ENCODE measurements at regions of chr20 and their contacts with region 1.

Region 1: DNA sequence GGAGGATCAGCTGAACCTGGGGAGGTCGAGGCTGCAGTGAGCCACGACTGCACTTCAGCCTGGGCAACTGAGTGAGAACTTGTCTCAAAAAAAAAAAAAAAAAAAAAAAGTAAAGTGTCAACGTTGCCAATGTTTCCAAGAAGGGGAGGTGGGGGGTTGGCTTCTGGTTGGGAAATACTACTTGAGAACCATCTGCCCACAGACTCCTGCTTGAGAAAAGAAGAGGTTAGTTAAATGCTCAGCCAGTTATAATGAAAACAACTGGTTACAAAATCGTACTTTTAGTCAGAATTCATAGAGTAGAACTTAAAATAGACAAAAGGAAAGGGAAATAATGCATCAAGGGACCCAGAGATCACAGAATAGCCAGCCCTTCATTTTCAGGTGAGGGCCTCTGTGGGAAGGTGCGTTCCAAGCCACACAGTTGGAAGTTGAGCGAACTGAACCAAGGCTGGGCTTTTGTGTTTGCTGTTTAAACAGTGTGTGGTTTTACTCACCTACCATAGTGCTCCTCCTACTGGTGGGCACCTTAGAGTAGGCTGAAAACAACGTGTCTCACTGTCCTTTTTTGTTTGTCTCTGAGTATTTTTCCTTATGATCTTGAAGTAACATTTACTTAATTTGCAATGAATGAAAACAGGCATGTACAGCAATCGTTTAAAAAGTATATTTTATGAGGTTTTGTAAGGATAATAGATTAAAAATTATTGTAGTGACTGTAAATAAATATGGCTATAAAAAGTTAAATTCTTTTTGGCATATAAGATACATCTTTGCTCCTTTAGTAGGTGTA is 200.7 kb downstream of the BCAS1 start:
- DNase-seq: peak; percentile 92
- H3K4me3 Mint-ChIP-seq: peak overlapping the region; percentile 57
- H3K27ac Mint-ChIP-seq: peak overlapping the region; percentile 92
- H3K4me1 Mint-ChIP-seq: peaks cover 63% of the 10 kb centered on the region
- H3K27me3 Mint-ChIP-seq: no peaks in the 10 kb centered on the region

Region 2: GRCh38 chr20:53660078-53660909 is 209.4 kb before region 1 on chr20:
- intact Hi-C with region 1: loop called (anchors 1 kb)
- DNase-seq: peak; percentile 82
- H3K4me3 Mint-ChIP-seq: peak overlapping the region; percentile 84
- H3K27ac Mint-ChIP-seq: peak overlapping the region; percentile 93
- H3K4me1 Mint-ChIP-seq: peaks cover 54% of the 10 kb centered on the region
- H3K27me3 Mint-ChIP-seq: no peaks in the 10 kb centered on the region

Region 3: GRCh38 chr20:53828682-53829254 is 40.9 kb before region 1 on chr20:
- intact Hi-C with region 1: loop called (anchors 5 kb)
- DNase-seq: no peak
- H3K4me3 Mint-ChIP-seq: peak overlapping the region; percentile 91
- H3K27ac Mint-ChIP-seq: peak overlapping the region; percentile 96
- H3K4me1 Mint-ChIP-seq: peaks cover 50% of the 10 kb centered on the region
- H3K27me3 Mint-ChIP-seq: no peaks in the 10 kb centered on the region

Region 4: GRCh38 chr20:53857723-53858236 is 11.9 kb before region 1 on chr20:
- intact Hi-C with region 1: no loop called
- DNase-seq: no peak
- H3K4me3 Mint-ChIP-seq: no peak overlapping the region
- H3K27ac Mint-ChIP-seq: peak overlapping the region; percentile 42
- H3K4me1 Mint-ChIP-seq: peaks cover 29% of the 10 kb centered on the region
- H3K27me3 Mint-ChIP-seq: no peaks in the 10 kb centered on the region

Region 5: DNA sequence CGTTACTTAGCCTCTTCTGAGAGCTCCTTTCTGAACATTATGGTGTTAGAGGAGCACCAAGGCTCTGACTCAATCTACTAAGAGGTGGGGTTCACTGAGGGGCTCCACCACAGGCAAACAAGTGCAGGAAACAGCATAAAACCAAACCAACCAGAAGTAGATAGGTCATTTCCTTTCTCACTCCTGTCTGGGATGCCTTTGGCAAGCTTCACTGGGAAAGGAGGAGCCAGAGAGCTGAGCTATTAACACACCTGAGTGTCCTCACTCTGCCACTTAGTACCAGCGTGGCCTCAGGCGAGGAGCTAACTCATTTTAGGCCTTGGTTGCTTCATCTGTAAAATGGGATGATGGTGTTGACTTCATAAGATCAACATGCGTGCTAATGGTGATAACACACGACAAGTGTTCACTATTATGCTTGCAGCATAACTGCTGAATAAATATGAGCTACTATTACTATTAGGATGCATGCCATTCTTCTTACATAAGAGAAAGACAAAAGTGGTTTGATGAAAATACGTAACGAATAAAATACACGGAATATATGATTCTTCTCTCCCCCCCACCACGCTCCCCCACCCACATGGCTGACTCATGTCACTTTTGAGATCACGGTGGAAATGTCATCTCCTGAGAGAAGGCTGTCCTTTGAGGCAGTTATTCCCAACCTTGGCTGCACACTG is 15.3 kb after region 1 on chr20:
- intact Hi-C with region 1: loop called (anchors 1 kb)
- DNase-seq: no peak
- H3K4me3 Mint-ChIP-seq: peak overlapping the region; percentile 39
- H3K27ac Mint-ChIP-seq: peak overlapping the region; percentile 68
- H3K4me1 Mint-ChIP-seq: peaks cover 40% of the 10 kb centered on the region
- H3K27me3 Mint-ChIP-seq: no peaks in the 10 kb centered on the region

Region 6: GRCh38 chr20:53899351-53900167 is 29.9 kb after region 1 on chr20:
- intact Hi-C with region 1: loop called (anchors 1 kb)
- DNase-seq: peak; percentile 92
- H3K4me3 Mint-ChIP-seq: peak overlapping the region; percentile 53
- H3K27ac Mint-ChIP-seq: peak overlapping the region; percentile 95
- H3K4me1 Mint-ChIP-seq: peaks cover 53% of the 10 kb centered on the region
- H3K27me3 Mint-ChIP-seq: no peaks in the 10 kb centered on the region

Region 7: DNA sequence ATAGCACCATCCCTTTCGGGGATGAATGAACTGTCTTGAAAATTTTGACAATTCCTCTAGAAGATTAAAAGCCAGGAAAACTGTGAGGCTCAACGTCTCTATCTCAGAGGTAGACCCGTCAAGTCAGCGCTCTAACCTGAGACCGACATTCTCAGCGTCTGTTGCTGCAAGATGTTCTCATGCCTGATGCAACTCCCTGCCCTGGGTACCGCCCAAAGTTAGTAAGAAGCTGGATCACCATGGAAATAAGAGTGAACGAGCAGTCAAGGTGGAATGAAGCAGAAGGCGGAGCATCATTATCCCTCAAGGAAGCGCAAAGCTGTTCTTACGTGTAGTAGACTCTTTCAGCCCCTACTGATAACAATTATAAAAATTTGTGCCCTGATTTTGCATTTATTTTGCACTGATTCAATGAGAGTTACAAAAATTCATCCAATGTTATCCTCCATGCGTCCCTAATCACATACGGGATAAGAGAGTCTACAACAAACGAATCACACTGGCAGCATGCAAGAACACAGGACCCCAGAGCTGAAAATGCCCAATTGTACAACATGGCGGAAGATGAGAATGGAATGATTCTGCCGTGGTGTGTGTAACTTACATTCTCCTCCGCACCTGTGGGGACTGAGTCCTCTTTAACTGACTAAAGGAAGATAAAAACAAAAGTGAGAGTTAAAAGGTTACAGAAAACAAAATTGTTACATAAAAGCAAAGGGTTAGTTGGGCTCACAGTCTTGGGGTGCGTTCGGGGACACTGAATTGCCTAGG is 105.3 kb after region 1 on chr20:
- intact Hi-C with region 1: no loop called
- DNase-seq: no peak
- H3K4me3 Mint-ChIP-seq: no peak overlapping the region
- H3K27ac Mint-ChIP-seq: no peak overlapping the region
- H3K4me1 Mint-ChIP-seq: no peaks in the 10 kb centered on the region
- H3K27me3 Mint-ChIP-seq: peaks cover 11% of the 10 kb centered on the region

Measured in activated CD4-positive, alpha-beta T cell treated with anti-CD3 and anti-CD28 coated beads, Interleukin-2, amount 10 ng/mL, durations not matched to agents 24 days and 14 days (primary cell).